Mammary epithelial cell (primary cell): ENCODE measurements at regions of chr19 and their contacts with region 1.

Region 1: DNA sequence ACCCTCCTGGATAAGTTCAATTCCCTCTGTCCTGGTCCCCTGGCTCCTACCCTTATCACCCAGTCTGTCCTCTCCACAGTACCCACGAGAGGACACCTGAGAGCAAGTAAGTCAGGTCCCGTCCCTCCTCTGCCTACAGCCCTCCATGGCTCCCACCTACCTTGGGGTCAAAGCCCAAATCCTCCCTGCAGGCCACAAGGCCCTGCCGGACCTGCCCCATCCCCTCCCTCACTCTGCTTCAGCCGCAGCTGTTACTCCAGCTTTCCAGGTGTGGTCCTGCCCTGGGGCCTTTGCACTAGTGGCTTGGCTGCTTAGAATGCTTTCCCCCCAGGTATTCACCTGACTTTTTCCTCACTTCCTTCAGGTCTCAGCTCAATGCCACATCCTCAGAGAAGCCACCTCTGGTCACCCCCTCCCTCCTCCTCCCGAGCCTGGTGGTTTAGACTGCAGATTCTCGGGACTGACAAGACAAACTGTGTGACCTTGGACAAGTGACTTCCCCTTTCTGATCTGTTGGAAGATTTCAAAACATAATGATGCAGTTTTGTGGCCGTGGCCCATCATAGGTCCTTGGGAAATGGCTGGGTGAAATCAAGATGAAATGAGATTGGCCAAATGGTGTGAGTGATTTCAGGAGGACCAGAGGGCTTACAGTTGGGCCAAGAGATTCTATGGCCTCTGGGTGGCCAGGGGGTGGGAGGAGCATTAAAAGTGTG is 3.6 kb downstream of the TUBB4A start:
- DNase-seq: no peak
- H3K4me3 ChIP-seq: no peak overlapping the region
- H3K27ac ChIP-seq: no peak overlapping the region
- H3K4me1 ChIP-seq: peaks cover 5% of the 10 kb centered on the region
- H3K27me3 ChIP-seq: peaks cover 9% of the 10 kb centered on the region
- CTCF ChIP-seq: no peak

Region 2: DNA sequence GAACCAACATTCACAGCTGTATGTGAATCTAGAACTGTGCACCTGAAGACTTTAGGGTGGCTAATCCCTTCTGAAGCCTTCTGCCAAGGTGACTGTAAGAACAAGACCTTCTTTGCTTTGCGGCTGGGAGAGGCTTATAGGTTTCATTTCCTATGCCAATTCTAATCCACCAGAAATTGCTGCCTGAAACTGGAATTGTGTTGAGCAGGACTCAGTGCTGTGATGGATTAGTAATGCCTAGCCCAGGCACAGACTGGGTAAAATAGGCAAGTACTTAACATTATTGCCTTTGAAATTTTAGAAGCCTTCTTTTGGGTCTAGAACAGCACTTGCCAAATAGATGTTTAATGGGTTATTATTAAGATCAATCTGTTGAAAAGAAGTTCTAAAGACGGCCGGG is 50.4 kb before region 1 on chr19:
- CTCF ChIA-PET with region 1: no interaction called
- dilution Hi-C with region 1: loop called (anchors 5 kb)
- in situ Hi-C with region 1: no loop called
- intact Hi-C with region 1: no loop called
- DNase-seq: no peak
- H3K4me3 ChIP-seq: no peak overlapping the region
- H3K27ac ChIP-seq: no peak overlapping the region
- H3K4me1 ChIP-seq: no peaks in the 10 kb centered on the region
- H3K27me3 ChIP-seq: no peaks in the 10 kb centered on the region
- CTCF ChIP-seq: no peak

Region 3: DNA sequence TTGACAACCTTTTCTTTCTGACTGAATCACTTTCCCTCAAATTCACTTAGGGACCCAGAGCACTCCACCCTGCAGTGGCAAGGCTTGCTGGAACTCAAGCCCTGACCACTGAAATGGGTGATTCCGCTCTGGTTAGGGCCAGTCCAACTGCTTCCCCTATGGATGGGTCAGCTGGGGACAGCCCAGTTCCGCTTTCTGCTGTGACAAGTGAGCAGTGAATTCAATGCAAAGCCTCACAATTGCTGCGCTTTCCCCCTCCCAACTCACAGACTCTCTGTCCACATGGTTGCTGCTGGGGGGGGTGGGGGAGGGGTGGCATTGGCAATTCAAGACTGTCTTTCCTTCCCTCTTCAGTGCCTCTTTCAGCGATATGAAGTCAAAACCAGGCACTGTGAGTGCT is 73.7 kb after region 1 on chr19:
- CTCF ChIA-PET with region 1: no interaction called
- dilution Hi-C with region 1: loop called (anchors 5 kb)
- in situ Hi-C with region 1: no loop called
- intact Hi-C with region 1: no loop called
- DNase-seq: no peak
- H3K4me3 ChIP-seq: no peak overlapping the region
- H3K27ac ChIP-seq: no peak overlapping the region
- H3K4me1 ChIP-seq: peaks cover 14% of the 10 kb centered on the region
- H3K27me3 ChIP-seq: no peaks in the 10 kb centered on the region
- CTCF ChIP-seq: no peak

Region 4: GRCh38 chr19:6718741-6719539 is 220.5 kb after region 1 on chr19:
- CTCF ChIA-PET with region 1: no interaction called
- dilution Hi-C with region 1: loop called (anchors 5 kb)
- in situ Hi-C with region 1: no loop called
- intact Hi-C with region 1: no loop called
- DNase-seq: peak; percentile 23
- H3K4me3 ChIP-seq: peak overlapping the region in 1 of 3 experiments; percentile 31
- H3K27ac ChIP-seq: no peak overlapping the region
- H3K4me1 ChIP-seq: peaks cover 35% of the 10 kb centered on the region
- H3K27me3 ChIP-seq: no peaks in the 10 kb centered on the region
- CTCF ChIP-seq: no peak